CD4-positive, alpha-beta T cell (primary cell): ENCODE measurements at regions of chr6 and their contacts with region 1.

Region 1: DNA sequence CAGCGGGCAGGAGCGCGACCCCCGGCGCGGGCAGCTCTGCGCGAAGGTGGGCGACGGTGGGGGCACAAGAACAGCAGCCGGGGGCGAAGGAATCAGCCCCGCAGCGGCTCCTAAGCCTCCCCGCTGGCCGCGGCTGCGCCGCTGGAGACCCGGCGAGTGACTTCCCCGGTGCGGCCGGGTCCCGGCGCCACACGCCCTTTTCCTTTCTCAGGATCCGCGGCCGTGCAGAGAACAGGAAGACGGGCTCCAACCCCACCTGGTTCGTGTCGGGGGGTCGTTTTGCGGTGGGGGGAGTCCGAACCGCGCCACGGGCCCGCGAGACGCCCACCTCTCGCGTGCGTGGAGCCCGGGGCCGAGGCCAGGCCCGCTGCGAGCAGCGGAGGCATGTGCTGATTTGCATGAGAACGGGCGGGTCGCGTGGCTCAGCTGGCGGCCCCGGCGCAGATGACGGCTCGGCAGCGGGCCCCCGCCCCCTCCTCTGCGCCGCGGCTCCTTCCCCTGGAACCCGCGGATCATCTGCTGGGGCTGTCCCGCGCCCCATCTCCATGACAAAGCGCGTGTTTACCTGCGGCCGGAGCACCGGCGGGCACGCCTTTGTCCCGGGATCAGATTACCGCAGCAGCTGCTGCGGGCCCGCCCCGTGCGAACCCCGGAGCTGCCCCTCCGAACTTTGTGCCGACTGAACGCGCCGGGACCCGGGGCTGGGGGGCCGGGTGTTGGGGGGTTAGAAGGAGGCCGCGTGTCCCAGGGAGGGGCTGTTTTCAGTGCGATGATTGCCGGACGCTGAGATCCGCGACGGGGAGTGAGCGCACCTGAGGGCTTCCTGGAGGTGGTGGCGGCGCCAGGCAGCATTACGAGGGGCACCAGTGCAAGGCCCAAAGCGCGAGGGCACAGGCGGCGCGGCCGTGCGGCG is 4.9 kb upstream of the DLL1 start:
- DNase-seq: peak in 5 of 14 experiments; percentile 22 to 77 (median 55)
- ATAC-seq: peak; percentile 50
- H3K4me3 ChIP-seq: peak overlapping the region; percentile 44
- H3K4me3 Mint-ChIP-seq: peak overlapping the region; percentile 68
- H3K27ac ChIP-seq: no peak overlapping the region
- H3K27ac Mint-ChIP-seq: no peak overlapping the region
- H3K4me1 ChIP-seq: peaks cover 59% of the 10 kb centered on the region
- H3K4me1 Mint-ChIP-seq: peaks cover 38% of the 10 kb centered on the region
- H3K27me3 ChIP-seq: peaks cover 69% of the 10 kb centered on the region in 2 experiments
- H3K27me3 Mint-ChIP-seq: peaks cover 78% of the 10 kb centered on the region
- CTCF ChIP-seq: no peak

Region 2: DNA sequence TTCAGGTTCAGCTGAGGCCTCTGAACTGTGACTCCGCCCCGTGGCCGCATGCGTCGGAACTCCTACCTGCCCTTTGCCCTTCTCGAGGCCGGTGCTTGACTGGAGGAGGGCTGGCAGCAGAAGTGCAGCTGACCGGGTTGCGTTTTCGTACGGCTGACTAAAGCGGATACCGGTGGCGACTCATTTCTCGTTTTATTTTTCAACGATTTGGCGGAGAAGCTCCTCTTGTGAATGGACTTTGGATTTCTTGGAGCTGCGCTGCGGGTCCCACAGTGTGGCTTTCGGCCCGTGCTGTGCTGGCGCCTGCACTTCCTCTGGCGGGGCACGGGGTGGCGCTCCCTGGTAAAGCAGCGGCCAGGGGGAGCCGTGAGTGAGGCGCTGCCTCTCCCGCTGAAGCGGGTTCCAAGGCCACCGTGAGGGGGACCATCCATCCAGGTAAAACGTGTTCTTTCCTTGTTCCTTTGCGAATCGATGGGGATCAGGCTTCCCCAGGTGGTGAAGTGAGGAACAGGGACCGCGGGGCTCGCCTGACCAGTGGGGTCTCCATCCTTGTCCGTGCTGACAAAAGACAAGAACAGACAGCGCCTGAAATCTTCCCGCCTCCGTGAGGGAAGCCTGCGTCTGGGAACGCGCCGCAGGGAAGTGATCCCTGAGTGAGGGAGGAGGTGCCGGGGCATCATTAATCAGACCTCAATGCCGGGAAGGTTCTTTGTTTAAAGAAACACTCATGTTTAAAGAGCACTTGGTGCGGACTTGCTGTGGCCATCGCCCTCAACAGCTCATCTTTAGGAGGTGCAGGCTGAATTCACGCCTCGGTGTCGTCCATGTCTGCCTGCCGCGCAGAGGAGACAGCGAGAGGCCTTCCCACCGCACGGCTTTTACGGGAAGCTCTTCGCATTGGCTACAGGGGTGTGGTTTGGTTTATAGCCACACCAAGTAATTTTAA is 505.5 kb before region 1 on chr6:
- CTCF ChIA-PET with region 1: no interaction called
- POLR2A ChIA-PET with region 1: no interaction called
- intact Hi-C with region 1: loop called in 1 of 2 experiments (anchors 2 kb)
- DNase-seq: peak; percentile 46 to 83 (median 67)
- ATAC-seq: peak; percentile 97
- H3K4me3 ChIP-seq: peak overlapping the region; percentile 70
- H3K4me3 Mint-ChIP-seq: peak overlapping the region; percentile 89
- H3K27ac ChIP-seq: no peak overlapping the region
- H3K27ac Mint-ChIP-seq: no peak overlapping the region
- H3K4me1 ChIP-seq: peaks cover 16% of the 10 kb centered on the region
- H3K4me1 Mint-ChIP-seq: peaks cover 18% of the 10 kb centered on the region
- H3K27me3 ChIP-seq: no peaks in the 10 kb centered on the region
- H3K27me3 Mint-ChIP-seq: peaks cover 39% of the 10 kb centered on the region
- CTCF ChIP-seq: peak; percentile 95

Region 3: GRCh38 chr6:169950558-169950957 is 345.2 kb before region 1 on chr6:
- CTCF ChIA-PET with region 1: no interaction called
- POLR2A ChIA-PET with region 1: no interaction called
- intact Hi-C with region 1: loop called (anchors 2 to 5 kb)
- DNase-seq: peak in 9 of 14 experiments; percentile 10 to 66 (median 36)
- ATAC-seq: no peak
- H3K4me3 ChIP-seq: no peak overlapping the region
- H3K4me3 Mint-ChIP-seq: no peak overlapping the region
- H3K27ac ChIP-seq: no peak overlapping the region
- H3K27ac Mint-ChIP-seq: no peak overlapping the region
- H3K4me1 ChIP-seq: no peaks in the 10 kb centered on the region
- H3K4me1 Mint-ChIP-seq: no peaks in the 10 kb centered on the region
- H3K27me3 ChIP-seq: no peaks in the 10 kb centered on the region
- H3K27me3 Mint-ChIP-seq: no peaks in the 10 kb centered on the region
- CTCF ChIP-seq: peak; percentile 52

Region 4: GRCh38 chr6:170271771-170272314 is 23.9 kb before region 1 on chr6:
- CTCF ChIA-PET with region 1: no interaction called
- POLR2A ChIA-PET with region 1: interaction called, 50 read pairs
- intact Hi-C with region 1: no loop called
- DNase-seq: peak; percentile 38 to 92 (median 72)
- ATAC-seq: peak; percentile 88
- H3K4me3 ChIP-seq: peak overlapping the region; percentile 56
- H3K4me3 Mint-ChIP-seq: peak overlapping the region; percentile 86
- H3K27ac ChIP-seq: peak overlapping the region; percentile 29 to 65
- H3K27ac Mint-ChIP-seq: peak overlapping the region; percentile 92
- H3K4me1 ChIP-seq: peaks cover 30% of the 10 kb centered on the region
- H3K4me1 Mint-ChIP-seq: peaks cover 22% of the 10 kb centered on the region
- H3K27me3 ChIP-seq: peaks cover 0 to 2% of the 10 kb centered on the region in 2 experiments
- H3K27me3 Mint-ChIP-seq: no peaks in the 10 kb centered on the region
- CTCF ChIP-seq: no peak

Region 5: GRCh38 chr6:170306324-170307079 is 10.7 kb after region 1 on chr6 and contains the start of gene FAM120B:
- CTCF ChIA-PET with region 1: interaction called, 5 read pairs
- POLR2A ChIA-PET with region 1: interaction called, 37 read pairs
- intact Hi-C with region 1: no loop called
- DNase-seq: peak; percentile 91 to 99 (median 95)
- ATAC-seq: peak; percentile 95
- H3K4me3 ChIP-seq: peak within 1 kb of the TSS; percentile 91
- H3K4me3 Mint-ChIP-seq: peak within 1 kb of the TSS; percentile 93
- H3K27ac ChIP-seq: peak within 1 kb of the TSS; percentile 76 to 80
- H3K27ac Mint-ChIP-seq: peak within 1 kb of the TSS; percentile 87
- H3K4me1 ChIP-seq: peaks cover 37% of the 10 kb centered on the region
- H3K4me1 Mint-ChIP-seq: peaks cover 51% of the 10 kb centered on the region
- H3K27me3 ChIP-seq: no peaks in the 10 kb centered on the region
- H3K27me3 Mint-ChIP-seq: peaks cover 22% of the 10 kb centered on the region
- CTCF ChIP-seq: no peak
- total RNA-seq, gene FAM120B: 24.1 to 26.7 TPM